ENCODE measurements at regions of chr14 and their contacts with region 1.

Region 1: GRCh38 chr14:49598485-49599300 is at the start of gene LRR1:
- DNase-seq: peak; percentile 87
- H3K4me3 Mint-ChIP-seq: peak within 1 kb of the TSS; percentile 98
- H3K27ac Mint-ChIP-seq: peak within 1 kb of the TSS; percentile 99
- H3K4me1 Mint-ChIP-seq: peaks cover 6% of the 10 kb centered on the region
- H3K27me3 Mint-ChIP-seq: no peaks in the 10 kb centered on the region
- CTCF ChIP-seq: no peak
- total RNA-seq, gene LRR1: 17.0 and 19.8 TPM in 2 replicates

Region 2: GRCh38 chr14:49585803-49586672 is 12.7 kb before region 1 on chr14 and contains the start of gene RPS29:
- CTCF ChIA-PET with region 1: interaction called, 17 read pairs
- POLR2A ChIA-PET with region 1: interaction called, 117 read pairs
- intact Hi-C with region 1: no loop called
- DNase-seq: peak; percentile 99
- H3K4me3 Mint-ChIP-seq: peak within 1 kb of the TSS; percentile 81
- H3K27ac Mint-ChIP-seq: peak within 1 kb of the TSS; percentile 98
- H3K4me1 Mint-ChIP-seq: peaks cover 19% of the 10 kb centered on the region
- H3K27me3 Mint-ChIP-seq: no peaks in the 10 kb centered on the region
- CTCF ChIP-seq: no peak
- total RNA-seq, gene RPS29: 1,499 and 1,837 TPM in 2 replicates

Region 3: DNA sequence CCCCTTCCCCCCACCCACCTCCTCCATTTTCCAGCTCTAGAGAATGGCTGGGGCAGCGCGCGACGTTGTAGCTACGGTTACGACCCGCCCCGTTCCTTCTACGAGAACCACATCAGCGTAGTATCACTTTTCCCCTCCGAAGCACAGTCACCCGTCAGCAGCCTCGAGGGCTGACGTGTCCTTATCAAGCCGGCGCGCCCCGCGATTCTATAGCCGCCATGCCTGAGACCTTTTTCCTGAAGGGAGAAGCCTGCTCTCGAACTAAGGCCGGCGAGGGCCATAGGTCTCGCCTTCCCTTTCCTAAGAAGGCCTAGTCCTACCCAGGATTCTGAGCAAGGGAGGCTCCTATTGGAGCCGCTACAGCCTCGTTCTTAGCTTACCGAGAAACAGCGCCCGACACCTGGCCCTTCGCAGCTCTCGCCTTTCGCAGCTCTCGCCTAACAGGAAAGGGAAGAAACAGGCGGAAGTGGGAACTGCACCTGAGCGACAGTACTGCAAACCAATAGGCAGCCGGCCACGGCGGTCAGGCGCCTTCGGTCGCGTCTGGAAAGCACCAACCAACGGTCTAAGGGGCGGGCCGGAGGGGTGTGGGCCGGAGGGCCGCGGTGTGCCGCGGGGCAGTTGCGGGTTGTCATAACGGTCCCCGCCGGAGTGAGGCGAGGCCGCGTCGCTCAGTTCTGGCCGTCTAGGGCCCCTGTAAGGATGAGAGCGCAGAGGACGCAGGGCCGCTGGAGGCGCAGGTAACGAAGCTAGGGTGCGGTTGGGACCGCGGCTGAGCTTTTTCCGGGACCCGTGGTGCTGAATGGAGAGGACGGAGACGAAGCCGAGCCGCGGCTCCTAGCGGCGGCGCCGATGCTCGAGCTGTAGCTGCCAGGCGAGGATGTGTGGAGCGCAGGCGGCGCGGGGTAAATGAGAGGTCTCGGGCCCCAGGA is 21.8 kb after region 1 on chr14 and contains the starts of genes MGAT2 and RPL36AL:
- CTCF ChIA-PET with region 1: interaction called, 10 read pairs
- POLR2A ChIA-PET with region 1: interaction called, 180 read pairs
- intact Hi-C with region 1: no loop called
- DNase-seq: peak; percentile 98
- H3K4me3 Mint-ChIP-seq: peak within 1 kb of the TSS; percentile 99
- H3K27ac Mint-ChIP-seq: peak within 1 kb of the TSS; percentile 99
- H3K4me1 Mint-ChIP-seq: peaks cover 28% of the 10 kb centered on the region
- H3K27me3 Mint-ChIP-seq: no peaks in the 10 kb centered on the region
- CTCF ChIP-seq: peak; percentile 14
- total RNA-seq, gene MGAT2: 43.8 and 44.3 TPM in 2 replicates
- total RNA-seq, gene RPL36AL: 257 and 299 TPM in 2 replicates